ENCODE measurements at regions of chr5 and their contacts with region 1.

Region 1: DNA sequence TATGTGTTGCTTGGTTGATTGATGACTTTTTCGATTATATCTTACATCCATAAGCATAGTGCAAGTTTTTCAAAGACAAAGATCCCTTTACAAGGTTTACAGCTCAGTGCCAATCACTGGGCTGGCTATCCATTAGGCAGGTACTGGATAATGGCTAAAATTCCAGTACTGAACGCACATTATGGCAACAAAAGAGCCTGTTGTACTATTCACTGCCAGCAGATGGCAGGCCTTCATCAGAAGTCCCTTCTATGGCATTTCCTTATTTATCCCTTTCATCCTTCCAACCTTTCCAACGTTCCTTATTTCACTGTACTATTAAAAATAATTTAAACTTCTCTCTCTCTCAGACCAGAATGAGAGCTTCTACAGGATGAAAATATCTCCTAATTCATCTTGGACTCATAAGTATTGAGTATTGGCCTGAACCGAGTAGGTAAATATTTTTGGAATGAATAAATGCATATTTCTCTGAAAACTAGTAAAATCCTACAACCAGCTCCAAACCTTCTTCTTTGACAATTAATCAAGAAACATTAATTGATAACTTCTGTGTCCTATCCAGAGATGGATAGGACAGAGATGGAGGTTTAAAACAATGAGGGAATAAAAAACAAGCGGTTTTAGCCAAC is 6.7 kb upstream of the WNT8A start:
- DNase-seq: peak; percentile 41
- ATAC-seq: no peak
- H3K4me3 Mint-ChIP-seq: no peak overlapping the region
- H3K27ac Mint-ChIP-seq: no peak overlapping the region
- H3K4me1 Mint-ChIP-seq: peaks cover 16% of the 10 kb centered on the region
- H3K27me3 Mint-ChIP-seq: peaks cover 8% of the 10 kb centered on the region

Region 2: DNA sequence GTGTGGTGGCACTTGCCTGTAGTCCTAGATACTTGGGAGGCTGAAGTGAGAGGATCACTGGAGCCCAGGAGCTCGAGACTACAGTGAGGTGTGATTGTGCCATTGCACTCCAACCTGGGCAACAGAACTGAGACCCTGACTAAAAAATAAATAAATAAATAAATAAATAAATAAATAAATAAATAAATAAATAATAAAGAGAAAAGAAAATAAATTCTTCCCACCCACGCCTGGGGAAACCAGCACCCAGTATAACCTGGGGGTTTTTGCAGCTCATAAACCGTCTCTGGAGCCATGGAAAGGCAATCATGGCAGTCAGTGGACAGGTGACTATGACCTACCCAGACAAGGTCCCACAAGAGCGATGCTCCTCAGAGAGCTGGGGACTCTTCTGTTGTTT is 14.5 kb after region 1 on chr5:
- POLR2A ChIA-PET with region 1: no interaction called
- DNase-seq: no peak
- ATAC-seq: no peak
- H3K4me3 Mint-ChIP-seq: no peak overlapping the region
- H3K27ac Mint-ChIP-seq: no peak overlapping the region
- H3K4me1 Mint-ChIP-seq: peaks cover 17% of the 10 kb centered on the region
- H3K27me3 Mint-ChIP-seq: peaks cover 4% of the 10 kb centered on the region

Region 3: GRCh38 chr5:138110266-138110963 is 33.2 kb after region 1 on chr5:
- POLR2A ChIA-PET with region 1: no interaction called
- DNase-seq: no peak
- ATAC-seq: no peak
- H3K4me3 Mint-ChIP-seq: no peak overlapping the region
- H3K27ac Mint-ChIP-seq: no peak overlapping the region
- H3K4me1 Mint-ChIP-seq: no peaks in the 10 kb centered on the region
- H3K27me3 Mint-ChIP-seq: peaks cover 22% of the 10 kb centered on the region

Region 4: GRCh38 chr5:138132543-138132942 is 55.4 kb after region 1 on chr5:
- POLR2A ChIA-PET with region 1: interaction called, 15 read pairs
- DNase-seq: no peak
- ATAC-seq: no peak
- H3K4me3 Mint-ChIP-seq: no peak overlapping the region
- H3K27ac Mint-ChIP-seq: no peak overlapping the region
- H3K4me1 Mint-ChIP-seq: peaks cover 5% of the 10 kb centered on the region
- H3K27me3 Mint-ChIP-seq: peaks cover 16% of the 10 kb centered on the region

Region 5: DNA sequence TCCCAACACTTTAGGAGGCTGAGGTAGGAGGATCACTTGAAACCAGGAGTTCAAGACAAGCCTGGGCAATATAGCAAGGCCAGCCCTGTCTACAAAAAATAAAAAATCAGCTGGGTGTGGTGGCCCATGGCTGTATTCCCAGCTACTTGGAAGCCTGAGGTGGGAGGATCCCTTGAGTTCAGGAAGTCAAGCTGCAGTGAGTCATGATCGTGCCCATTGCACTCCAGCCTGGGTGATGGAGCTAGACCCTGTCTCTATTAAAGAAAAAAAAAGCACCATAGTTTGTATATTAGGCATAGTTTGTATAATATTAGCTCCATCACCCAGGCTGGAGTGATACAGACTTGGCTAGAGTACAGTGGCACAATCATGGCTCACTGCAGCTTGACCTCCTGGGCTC is 71.6 kb after region 1 on chr5:
- POLR2A ChIA-PET with region 1: no interaction called
- DNase-seq: no peak
- ATAC-seq: no peak
- H3K4me3 Mint-ChIP-seq: no peak overlapping the region
- H3K27ac Mint-ChIP-seq: no peak overlapping the region
- H3K4me1 Mint-ChIP-seq: no peaks in the 10 kb centered on the region
- H3K27me3 Mint-ChIP-seq: peaks cover 16% of the 10 kb centered on the region

Region 6: DNA sequence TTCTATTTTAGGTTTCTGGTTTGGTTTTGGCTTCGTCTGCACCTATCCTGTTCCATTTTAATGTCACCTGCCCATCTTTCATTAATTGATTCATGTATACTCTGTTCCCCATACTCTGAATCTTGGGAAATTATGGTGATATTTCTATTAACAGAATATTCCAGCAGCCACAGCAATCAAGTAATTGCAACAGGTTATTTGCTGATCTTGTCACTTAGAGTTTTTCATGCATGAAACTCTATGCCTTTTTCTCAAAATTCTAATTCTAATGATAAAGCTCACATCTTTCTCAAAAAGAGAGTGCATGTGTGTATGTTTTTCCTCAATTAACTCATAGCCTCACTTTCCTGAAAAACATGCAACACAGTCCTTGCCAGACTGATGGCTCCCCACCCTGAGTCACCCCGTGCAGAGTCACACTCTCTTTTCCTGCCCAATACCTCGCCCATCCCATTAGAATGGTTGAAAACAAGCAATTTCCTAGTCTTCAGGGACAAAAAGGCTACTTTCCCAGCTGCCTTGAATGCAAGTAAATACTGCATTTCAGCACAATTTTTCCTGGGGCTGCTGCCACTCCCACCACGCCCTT is 181.6 kb after region 1 on chr5:
- POLR2A ChIA-PET with region 1: no interaction called
- DNase-seq: no peak
- ATAC-seq: no peak
- H3K4me3 Mint-ChIP-seq: no peak overlapping the region
- H3K27ac Mint-ChIP-seq: no peak overlapping the region
- H3K4me1 Mint-ChIP-seq: no peaks in the 10 kb centered on the region
- H3K27me3 Mint-ChIP-seq: peaks cover 14% of the 10 kb centered on the region